HepG2 (cell line): ENCODE measurements at regions of chr2 and their contacts with region 1.

Region 1: GRCh38 chr2:168246483-168247340 is 683 bp downstream of the STK39 start:
- DNase-seq: peak; percentile 31
- ATAC-seq: peak; percentile 81
- H3K4me3 ChIP-seq: peak overlapping the region; percentile 65 to 94 (median 81)
- H3K27ac ChIP-seq: peak overlapping the region; percentile 74
- H3K4me1 ChIP-seq: peaks cover 52% of the 10 kb centered on the region
- H3K27me3 ChIP-seq: no peaks in the 10 kb centered on the region
- CTCF ChIP-seq: peak; percentile 70
- EP300 ChIP-seq: no peak
- POLR2A ChIP-seq: no peak
- RAD21 ChIP-seq: peak; percentile 79

Region 2: GRCh38 chr2:167524786-167525185 is 721.9 kb before region 1 on chr2:
- CTCF ChIA-PET with region 1: no interaction called
- POLR2A ChIA-PET with region 1: no interaction called
- in situ Hi-C with region 1: no loop called
- intact Hi-C with region 1: no loop called
- DNase-seq: no peak
- ATAC-seq: no peak
- H3K4me3 ChIP-seq: no peak overlapping the region
- H3K27ac ChIP-seq: no peak overlapping the region
- H3K4me1 ChIP-seq: no peaks in the 10 kb centered on the region
- H3K27me3 ChIP-seq: no peaks in the 10 kb centered on the region
- CTCF ChIP-seq: no peak
- EP300 ChIP-seq: no peak
- POLR2A ChIP-seq: no peak
- RAD21 ChIP-seq: no peak

Region 3: DNA sequence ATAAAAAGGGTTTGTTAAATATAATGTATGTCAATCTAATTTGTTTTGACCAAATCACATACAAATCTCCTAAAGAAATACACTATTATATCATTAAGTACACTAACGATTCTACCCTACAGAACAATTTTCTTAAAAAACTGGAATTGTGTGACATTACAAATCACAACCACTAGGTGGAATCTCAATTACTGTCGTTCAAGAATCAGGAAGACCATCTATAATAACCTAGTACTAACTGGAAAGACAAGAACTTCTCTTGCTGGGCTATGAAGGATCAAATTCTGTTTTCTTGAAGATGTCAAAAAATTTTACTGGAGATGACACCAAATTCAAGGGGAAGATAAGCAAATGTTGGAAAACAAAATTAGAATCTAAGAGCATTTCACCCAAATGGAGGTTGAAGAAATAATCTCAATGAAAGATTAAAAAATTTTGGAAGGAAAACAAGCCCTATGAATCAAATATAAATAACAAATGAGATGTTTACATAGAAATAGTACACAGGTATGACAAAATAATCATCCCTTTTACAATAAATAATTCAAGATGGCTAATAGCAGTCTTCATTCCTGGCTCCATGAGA is 110.2 kb before region 1 on chr2:
- CTCF ChIA-PET with region 1: interaction called, 7 read pairs
- POLR2A ChIA-PET with region 1: no interaction called
- in situ Hi-C with region 1: no loop called
- intact Hi-C with region 1: loop called (anchors 2 kb)
- DNase-seq: peak; percentile 53
- ATAC-seq: peak; percentile 56
- H3K4me3 ChIP-seq: no peak overlapping the region
- H3K27ac ChIP-seq: no peak overlapping the region
- H3K4me1 ChIP-seq: no peaks in the 10 kb centered on the region
- H3K27me3 ChIP-seq: no peaks in the 10 kb centered on the region
- CTCF ChIP-seq: peak; percentile 66
- EP300 ChIP-seq: no peak
- POLR2A ChIP-seq: no peak
- RAD21 ChIP-seq: peak; percentile 35; the same call in 1 of the 2 replicates

Region 4: DNA sequence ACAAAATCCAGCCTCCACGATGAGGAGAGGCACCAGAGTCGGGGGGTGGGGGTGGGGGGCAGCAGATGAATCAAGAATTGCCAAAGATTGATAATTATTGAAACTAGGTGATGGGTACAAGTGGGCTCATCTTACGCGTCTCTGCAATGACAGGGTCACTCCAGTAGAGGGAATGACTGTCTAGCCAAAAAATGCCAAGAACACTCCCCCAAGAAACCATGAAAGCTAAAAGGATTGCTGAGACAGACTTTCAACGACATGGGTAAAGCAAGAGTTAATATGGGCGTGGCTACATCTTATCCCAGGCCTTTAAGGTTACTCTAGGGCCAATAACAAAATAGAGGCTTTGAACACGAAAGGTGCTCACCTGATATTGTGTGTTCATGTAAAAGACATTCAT is 85.8 kb before region 1 on chr2:
- CTCF ChIA-PET with region 1: interaction called, 4 read pairs
- POLR2A ChIA-PET with region 1: no interaction called
- in situ Hi-C with region 1: no loop called
- intact Hi-C with region 1: loop called (anchors 1 kb)
- DNase-seq: peak; percentile 60
- ATAC-seq: peak; percentile 67
- H3K4me3 ChIP-seq: no peak overlapping the region
- H3K27ac ChIP-seq: no peak overlapping the region
- H3K4me1 ChIP-seq: peaks cover 10% of the 10 kb centered on the region
- H3K27me3 ChIP-seq: no peaks in the 10 kb centered on the region
- CTCF ChIP-seq: peak; percentile 57
- EP300 ChIP-seq: no peak
- POLR2A ChIP-seq: no peak
- RAD21 ChIP-seq: peak; percentile 79

Region 5: DNA sequence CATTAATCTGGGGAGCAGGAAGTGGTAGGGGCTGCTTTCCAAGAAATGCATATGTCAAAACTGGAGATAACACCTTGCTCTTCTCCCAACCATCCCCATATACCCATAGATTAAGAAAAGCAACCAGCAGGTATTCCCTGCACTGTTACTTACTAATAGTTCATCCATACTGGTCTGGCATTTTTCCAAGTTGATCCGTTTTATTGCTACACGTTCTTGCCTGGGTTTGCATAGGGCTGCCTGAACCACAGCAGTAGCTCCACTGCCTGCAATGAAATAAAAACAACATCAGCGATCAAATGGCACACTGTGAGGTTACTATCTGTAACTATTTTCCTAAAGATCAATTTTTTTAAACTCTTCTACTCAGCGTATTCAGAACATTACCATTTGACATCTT is 64.9 kb before region 1 on chr2:
- CTCF ChIA-PET with region 1: no interaction called
- POLR2A ChIA-PET with region 1: interaction called, 3 read pairs
- in situ Hi-C with region 1: no loop called
- intact Hi-C with region 1: loop called (anchors 2 kb)
- DNase-seq: no peak
- ATAC-seq: no peak
- H3K4me3 ChIP-seq: no peak overlapping the region
- H3K27ac ChIP-seq: peak overlapping the region; percentile 88
- H3K4me1 ChIP-seq: peaks cover 98% of the 10 kb centered on the region
- H3K27me3 ChIP-seq: no peaks in the 10 kb centered on the region
- CTCF ChIP-seq: no peak
- EP300 ChIP-seq: no peak
- POLR2A ChIP-seq: no peak
- RAD21 ChIP-seq: no peak

Region 6: GRCh38 chr2:168210895-168211570 is 35.7 kb before region 1 on chr2:
- CTCF ChIA-PET with region 1: no interaction called
- POLR2A ChIA-PET with region 1: no interaction called
- in situ Hi-C with region 1: no loop called
- intact Hi-C with region 1: loop called (anchors 1 kb)
- DNase-seq: peak; percentile 88
- ATAC-seq: peak; percentile 77
- H3K4me3 ChIP-seq: no peak overlapping the region
- H3K27ac ChIP-seq: peak overlapping the region; percentile 49
- H3K4me1 ChIP-seq: peaks cover 51% of the 10 kb centered on the region
- H3K27me3 ChIP-seq: no peaks in the 10 kb centered on the region
- CTCF ChIP-seq: no peak
- EP300 ChIP-seq: peak in 1 of 2 experiments; percentile 89; a peak in 2 of 4 replicates
- POLR2A ChIP-seq: no peak
- RAD21 ChIP-seq: no peak

Region 7: GRCh38 chr2:168293766-168294165 is 47.1 kb after region 1 on chr2:
- CTCF ChIA-PET with region 1: no interaction called
- POLR2A ChIA-PET with region 1: no interaction called
- in situ Hi-C with region 1: no loop called
- intact Hi-C with region 1: loop called (anchors 5 kb)
- DNase-seq: peak; percentile 23
- ATAC-seq: peak; percentile 87
- H3K4me3 ChIP-seq: no peak overlapping the region
- H3K27ac ChIP-seq: no peak overlapping the region
- H3K4me1 ChIP-seq: no peaks in the 10 kb centered on the region
- H3K27me3 ChIP-seq: no peaks in the 10 kb centered on the region
- CTCF ChIP-seq: peak; percentile 51
- EP300 ChIP-seq: no peak
- POLR2A ChIP-seq: no peak
- RAD21 ChIP-seq: peak; percentile 32; the same call in 1 of the 2 replicates